CD8-positive, alpha-beta memory T cell (primary cell): ENCODE measurements at regions of chr12 and their contacts with region 1.

Region 1: GRCh38 chr12:48197971-48198671 is 5.0 kb downstream of the OR10AD1 start:
- DNase-seq: peak; percentile 78 to 93 (median 85)
- H3K4me3 ChIP-seq: peak overlapping the region; percentile 94
- H3K4me3 Mint-ChIP-seq: peak overlapping the region; percentile 87 to 93 (median 89)
- H3K27ac ChIP-seq: peak overlapping the region; percentile 99
- H3K27ac Mint-ChIP-seq: peak overlapping the region; percentile 85 to 100 (median 96)
- H3K4me1 ChIP-seq: peaks cover 34% of the 10 kb centered on the region
- H3K4me1 Mint-ChIP-seq: peaks cover 45 to 65% (median 60%) of the 10 kb centered on the region in 3 donors
- H3K27me3 ChIP-seq: no peaks in the 10 kb centered on the region
- H3K27me3 Mint-ChIP-seq: peaks cover 6 to 18% of the 10 kb centered on the region in 2 donors

Region 2: GRCh38 chr12:48183091-48183875 is 14.8 kb before region 1 on chr12 and contains the start of gene CCDC184:
- CTCF ChIA-PET with region 1: interaction called, 39 read pairs
- POLR2A ChIA-PET with region 1: interaction called, 29 read pairs
- DNase-seq: peak; percentile 57 to 91 (median 84)
- H3K4me3 ChIP-seq: peak within 1 kb of the TSS; percentile 91
- H3K4me3 Mint-ChIP-seq: peak within 1 kb of the TSS; percentile 93 to 97 (median 96)
- H3K27ac ChIP-seq: peak within 1 kb of the TSS; percentile 75
- H3K27ac Mint-ChIP-seq: peak within 1 kb of the TSS; percentile 71 to 96 (median 90)
- H3K4me1 ChIP-seq: peaks cover 16% of the 10 kb centered on the region
- H3K4me1 Mint-ChIP-seq: peaks cover 6 to 20% (median 11%) of the 10 kb centered on the region in 3 donors
- H3K27me3 ChIP-seq: peaks cover 12% of the 10 kb centered on the region
- H3K27me3 Mint-ChIP-seq: peaks cover 22 to 29% of the 10 kb centered on the region in 2 donors
- total RNA-seq, gene CCDC184: 0.72 to 0.97 TPM

Region 3: DNA sequence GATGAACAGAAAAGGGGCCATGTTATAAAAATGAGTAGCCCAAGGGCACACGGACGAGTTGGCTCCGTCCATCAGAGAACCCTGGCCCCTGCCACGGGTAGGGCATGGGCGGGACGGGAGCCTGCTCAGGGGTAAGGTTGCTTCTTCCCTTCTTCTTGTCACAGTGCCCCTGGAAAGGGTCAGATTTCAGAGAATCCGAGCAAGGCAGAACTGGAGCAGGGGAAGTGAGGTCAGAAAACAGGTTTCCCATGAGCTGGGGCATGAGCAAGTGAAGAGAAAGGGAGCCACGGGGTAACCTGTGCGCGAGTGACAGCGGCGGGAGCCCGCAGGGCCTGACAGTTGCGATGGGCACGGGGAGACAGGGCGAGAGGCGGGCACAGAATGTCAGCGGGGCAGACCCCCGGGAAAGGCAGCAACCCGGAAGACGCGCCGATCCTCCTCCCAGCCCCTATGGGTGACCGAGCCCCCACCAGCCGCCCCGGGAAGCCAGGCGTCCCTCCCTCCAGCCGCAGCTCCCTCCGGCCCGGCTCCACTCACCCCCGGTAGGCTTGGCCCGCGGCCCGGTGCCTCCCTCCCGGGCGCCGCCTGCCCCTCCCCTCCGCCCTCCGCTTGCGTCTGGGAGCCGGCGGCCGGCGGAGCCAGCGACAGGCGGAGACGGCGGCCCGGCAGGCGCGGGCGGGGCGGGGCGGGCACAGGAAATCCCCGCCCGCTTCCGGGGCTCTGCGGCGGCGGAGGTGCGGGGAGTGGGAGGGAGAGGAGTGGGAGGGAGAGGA is 152.3 kb after region 1 on chr12 and contains the start of gene ZNF641:
- CTCF ChIA-PET with region 1: interaction called, 10 read pairs
- POLR2A ChIA-PET with region 1: interaction called, 8 read pairs
- DNase-seq: peak; percentile 79 to 88 (median 86)
- H3K4me3 ChIP-seq: peak within 1 kb of the TSS; percentile 71
- H3K4me3 Mint-ChIP-seq: peak within 1 kb of the TSS; percentile 91 to 99 (median 98)
- H3K27ac ChIP-seq: peak within 1 kb of the TSS; percentile 72
- H3K27ac Mint-ChIP-seq: peak within 1 kb of the TSS; percentile 93 to 99 (median 96)
- H3K4me1 ChIP-seq: peaks cover 27% of the 10 kb centered on the region
- H3K4me1 Mint-ChIP-seq: peaks cover 29 to 44% (median 37%) of the 10 kb centered on the region in 3 donors
- H3K27me3 ChIP-seq: no peaks in the 10 kb centered on the region
- H3K27me3 Mint-ChIP-seq: peaks cover 0 to 4% of the 10 kb centered on the region in 2 donors
- total RNA-seq, gene ZNF641: 10.6 to 13.4 TPM

Region 4: GRCh38 chr12:48640854-48641253 is 442.7 kb after region 1 on chr12:
- CTCF ChIA-PET with region 1: no interaction called
- POLR2A ChIA-PET with region 1: no interaction called
- DNase-seq: no peak
- H3K4me3 ChIP-seq: no peak overlapping the region
- H3K4me3 Mint-ChIP-seq: no peak overlapping the region
- H3K27ac ChIP-seq: no peak overlapping the region
- H3K27ac Mint-ChIP-seq: no peak overlapping the region
- H3K4me1 ChIP-seq: no peaks in the 10 kb centered on the region
- H3K4me1 Mint-ChIP-seq: no peaks in the 10 kb centered on the region
- H3K27me3 ChIP-seq: no peaks in the 10 kb centered on the region
- H3K27me3 Mint-ChIP-seq: no peaks in the 10 kb centered on the region